ENCODE measurements at regions of chr16 and their contacts with region 1.

Region 1: GRCh38 chr16:30997000-30997886 is 12.2 kb downstream of the HSD3B7 start:
- DNase-seq: peak; percentile 73 to 84
- H3K4me3 ChIP-seq: peak overlapping the region; percentile 54 to 77 (median 56)
- H3K27ac ChIP-seq: peak overlapping the region; percentile 66 to 91
- H3K4me1 ChIP-seq: peaks cover 0 to 7% of the 10 kb centered on the region in 2 donors
- H3K27me3 ChIP-seq: no peaks in the 10 kb centered on the region
- CTCF ChIP-seq: no peak
- POLR2A ChIP-seq: no peak

Region 2: DNA sequence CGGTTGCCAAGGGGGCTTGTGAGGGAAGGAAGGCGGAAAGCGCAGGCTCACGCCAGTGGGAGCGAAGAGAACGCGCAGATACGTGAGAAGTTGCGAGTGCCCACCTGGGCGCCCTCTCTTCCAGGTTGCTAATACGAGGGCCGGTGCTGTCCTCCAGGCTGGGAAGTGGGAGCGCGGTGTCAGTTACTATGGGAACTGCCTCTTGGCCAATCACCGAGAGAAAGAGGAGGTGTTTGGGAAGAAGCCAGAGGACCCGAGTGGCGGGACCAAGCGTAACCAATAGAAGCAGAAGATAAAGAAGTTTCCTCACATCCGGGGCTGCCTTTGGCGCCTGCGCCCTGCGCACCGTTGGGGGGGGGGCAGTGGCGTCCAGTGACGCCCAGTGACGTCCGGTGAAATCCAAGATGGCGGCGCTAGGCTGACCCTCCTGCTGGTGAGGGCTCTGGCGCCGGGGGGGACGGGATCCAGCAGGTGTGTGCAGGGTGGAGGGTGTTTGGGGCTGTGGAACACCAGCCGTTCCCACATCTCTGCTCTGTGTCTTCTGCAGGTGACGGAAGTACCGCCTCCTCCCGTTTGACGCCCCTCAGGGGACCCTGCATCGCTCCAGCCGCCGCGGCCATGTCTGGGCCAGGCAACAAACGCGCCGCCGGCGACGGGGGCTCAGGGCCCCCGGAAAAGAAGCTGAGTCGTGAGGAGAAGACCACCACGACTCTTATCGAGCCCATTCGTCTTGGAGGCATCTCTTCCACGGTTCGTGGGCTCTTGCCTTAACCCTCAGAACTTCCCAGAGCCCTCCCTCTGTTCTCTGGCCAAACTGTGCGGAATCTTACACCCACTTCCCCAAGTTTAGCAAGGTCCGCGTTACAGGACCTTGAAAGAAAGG is 235.1 kb before region 1 on chr16 and contains the starts of genes CFAP119 and RNF40:
- intact Hi-C with region 1: no loop called
- DNase-seq: peak; percentile 96 to 99
- H3K4me3 ChIP-seq: peak within 1 kb of the TSS; percentile 82 to 93 (median 83)
- H3K27ac ChIP-seq: peak within 1 kb of the TSS; percentile 89 to 96
- H3K4me1 ChIP-seq: peaks cover 3 to 19% of the 10 kb centered on the region in 2 donors
- H3K27me3 ChIP-seq: no peaks in the 10 kb centered on the region
- CTCF ChIP-seq: no peak
- POLR2A ChIP-seq: peak; percentile 86
- total RNA-seq, gene CFAP119: 1.4 to 17.1 (median 13.4) TPM
- total RNA-seq, gene RNF40: 77.0 to 84.7 (median 77.3) TPM

Region 3: DNA sequence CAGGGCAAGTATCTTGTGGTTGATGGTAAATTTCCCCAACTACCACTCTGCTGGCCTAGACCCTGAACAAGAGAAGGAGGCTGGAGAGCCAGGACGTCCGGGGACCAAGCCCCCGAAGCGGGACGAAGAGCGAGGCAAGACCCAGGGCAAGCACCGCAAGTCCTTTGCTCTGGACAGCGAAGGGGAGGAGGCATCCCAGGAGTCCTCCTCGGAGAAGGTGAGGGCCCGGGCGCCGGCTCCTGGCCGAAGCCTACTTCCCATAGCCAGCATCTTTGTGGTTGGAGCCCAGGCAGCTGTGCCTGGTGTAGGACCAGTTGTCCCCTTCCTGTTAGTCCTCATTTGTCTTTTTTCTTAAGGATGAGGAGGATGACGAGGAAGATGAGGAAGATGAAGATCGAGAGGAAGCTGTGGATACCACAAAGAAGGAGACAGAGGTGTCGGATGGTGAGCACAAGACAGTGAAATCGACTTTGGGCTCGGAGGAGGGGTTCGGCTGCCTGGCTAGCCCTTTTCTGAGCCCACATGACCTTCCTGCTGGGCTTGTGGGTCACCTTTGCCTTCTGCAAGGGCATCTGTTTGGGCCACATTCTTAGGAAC is 27.9 kb before region 1 on chr16:
- intact Hi-C with region 1: loop called (anchors 1 kb)
- DNase-seq: no peak
- H3K4me3 ChIP-seq: no peak overlapping the region
- H3K27ac ChIP-seq: no peak overlapping the region
- H3K4me1 ChIP-seq: no peaks in the 10 kb centered on the region
- H3K27me3 ChIP-seq: no peaks in the 10 kb centered on the region
- CTCF ChIP-seq: no peak
- POLR2A ChIP-seq: no peak

Region 4: DNA sequence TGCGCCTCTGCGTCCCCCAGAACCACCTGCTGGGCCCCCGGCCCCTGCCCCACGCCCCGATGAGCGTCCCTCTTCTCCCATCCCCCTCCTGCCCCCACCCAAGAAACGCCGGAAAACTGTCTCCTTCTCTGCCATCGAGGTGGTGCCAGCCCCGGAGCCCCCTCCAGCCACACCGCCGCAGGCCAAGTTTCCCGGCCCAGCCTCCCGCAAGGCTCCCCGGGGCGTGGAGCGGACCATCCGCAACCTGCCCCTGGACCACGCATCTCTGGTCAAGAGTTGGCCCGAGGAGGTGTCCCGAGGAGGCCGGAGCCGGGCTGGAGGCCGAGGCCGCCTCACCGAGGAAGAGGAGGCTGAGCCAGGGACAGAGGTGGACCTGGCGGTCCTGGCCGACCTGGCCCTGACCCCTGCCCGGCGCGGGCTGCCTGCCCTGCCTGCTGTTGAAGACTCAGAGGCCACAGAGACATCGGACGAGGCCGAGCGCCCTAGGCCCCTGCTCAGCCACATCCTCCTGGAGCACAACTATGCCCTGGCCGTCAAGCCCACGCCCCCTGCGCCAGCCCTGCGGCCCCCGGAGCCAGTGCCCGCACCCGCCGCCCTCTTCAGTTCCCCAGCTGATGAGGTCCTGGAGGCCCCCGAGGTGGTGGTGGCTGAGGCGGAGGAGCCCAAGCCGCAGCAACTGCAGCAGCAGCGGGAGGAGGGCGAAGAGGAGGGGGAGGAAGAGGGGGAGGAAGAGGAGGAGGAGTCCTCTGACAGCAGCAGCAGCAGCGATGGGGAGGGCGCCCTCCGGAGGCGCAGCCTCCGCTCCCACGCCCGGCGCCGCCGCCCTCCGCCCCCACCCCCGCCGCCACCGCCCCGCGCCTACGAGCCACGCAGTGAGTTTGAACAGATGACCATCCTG is 17.8 kb before region 1 on chr16:
- intact Hi-C with region 1: no loop called
- DNase-seq: no peak
- H3K4me3 ChIP-seq: no peak overlapping the region
- H3K27ac ChIP-seq: no peak overlapping the region
- H3K4me1 ChIP-seq: no peaks in the 10 kb centered on the region
- H3K27me3 ChIP-seq: no peaks in the 10 kb centered on the region
- CTCF ChIP-seq: no peak
- POLR2A ChIP-seq: no peak

Region 5: GRCh38 chr16:31440516-31441184 is 443.4 kb after region 1 on chr16:
- intact Hi-C with region 1: loop called (anchors 10 kb)
- DNase-seq: no peak
- H3K4me3 ChIP-seq: no peak overlapping the region
- H3K27ac ChIP-seq: peak overlapping the region in 1 of 2 donors; percentile 10
- H3K4me1 ChIP-seq: no peaks in the 10 kb centered on the region
- H3K27me3 ChIP-seq: no peaks in the 10 kb centered on the region
- CTCF ChIP-seq: no peak
- POLR2A ChIP-seq: no peak

Measured in breast epithelium (tissue), 4 donors.